H1 (cell line): ENCODE measurements at regions of chr19 and their contacts with region 1.

Region 1: GRCh38 chr19:55624109-55625003 is at the start of gene ZNF784:
- DNase-seq: peak; percentile 87 to 95
- H3K4me3 ChIP-seq: peak within 1 kb of the TSS; percentile 48 to 95 (median 70)
- H3K27ac ChIP-seq: peak within 1 kb of the TSS; percentile 84; the same call in 1 of the 2 replicates
- H3K4me1 ChIP-seq: peaks cover 0 to 3% (median 0%) of the 10 kb centered on the region in 4 experiments; a peak in 3 of 7 replicates
- H3K27me3 ChIP-seq: no peaks in the 10 kb centered on the region
- CTCF ChIP-seq: no peak
- EP300 ChIP-seq: no peak
- POLR2A ChIP-seq: peak; percentile 62 to 86
- RAD21 ChIP-seq: no peak
- total RNA-seq, gene ZNF784: 8.0 and 8.6 TPM in 2 replicates

Region 2: GRCh38 chr19:55490478-55491432 is 133.6 kb before region 1 on chr19:
- CTCF ChIA-PET with region 1: no interaction called
- POLR2A ChIA-PET with region 1: no interaction called
- DNase-seq: no peak
- H3K4me3 ChIP-seq: no peak overlapping the region
- H3K27ac ChIP-seq: no peak overlapping the region
- H3K4me1 ChIP-seq: peaks cover 0 to 43% (median 28%) of the 10 kb centered on the region in 4 experiments; a peak in 6 of 7 replicates
- H3K27me3 ChIP-seq: no peaks in the 10 kb centered on the region; a peak in 2 of 7 replicates
- CTCF ChIP-seq: no peak
- EP300 ChIP-seq: no peak
- POLR2A ChIP-seq: no peak
- RAD21 ChIP-seq: no peak

Region 3: GRCh38 chr19:55599468-55600279 is 24.7 kb before region 1 on chr19 and contains the start of gene FIZ1:
- CTCF ChIA-PET with region 1: no interaction called
- POLR2A ChIA-PET with region 1: interaction called, 25 read pairs
- DNase-seq: peak; percentile 93 to 97
- H3K4me3 ChIP-seq: peak within 1 kb of the TSS; percentile 78 to 95 (median 86)
- H3K27ac ChIP-seq: peak within 1 kb of the TSS; percentile 100
- H3K4me1 ChIP-seq: peaks cover 0 to 14% (median 7%) of the 10 kb centered on the region in 4 experiments; a peak in 5 of 7 replicates
- H3K27me3 ChIP-seq: no peaks in the 10 kb centered on the region
- CTCF ChIP-seq: no peak
- EP300 ChIP-seq: 0 out of 3 replicates have a peak, but pooled peaks of 1 of the 2 experiments have one; percentile 41
- POLR2A ChIP-seq: peak in 1 of 2 experiments; percentile 81; a peak in 2 of 3 replicates
- RAD21 ChIP-seq: no peak
- total RNA-seq, gene FIZ1: 17.6 and 18.5 TPM in 2 replicates

Region 4: GRCh38 chr19:55605207-55605636 is 19.1 kb before region 1 on chr19:
- CTCF ChIA-PET with region 1: interaction called, 9 read pairs
- POLR2A ChIA-PET with region 1: interaction called, 32 read pairs
- DNase-seq: peak; percentile 94 to 98
- H3K4me3 ChIP-seq: peak overlapping the region; percentile 54 to 93 (median 68)
- H3K27ac ChIP-seq: peak overlapping the region; percentile 64; the same call in 1 of the 2 replicates
- H3K4me1 ChIP-seq: peaks cover 0 to 14% (median 10%) of the 10 kb centered on the region in 4 experiments; a peak in 6 of 7 replicates
- H3K27me3 ChIP-seq: no peaks in the 10 kb centered on the region
- CTCF ChIP-seq: no peak
- EP300 ChIP-seq: no peak
- POLR2A ChIP-seq: peak; percentile 49 to 71
- RAD21 ChIP-seq: no peak

Region 5: DNA sequence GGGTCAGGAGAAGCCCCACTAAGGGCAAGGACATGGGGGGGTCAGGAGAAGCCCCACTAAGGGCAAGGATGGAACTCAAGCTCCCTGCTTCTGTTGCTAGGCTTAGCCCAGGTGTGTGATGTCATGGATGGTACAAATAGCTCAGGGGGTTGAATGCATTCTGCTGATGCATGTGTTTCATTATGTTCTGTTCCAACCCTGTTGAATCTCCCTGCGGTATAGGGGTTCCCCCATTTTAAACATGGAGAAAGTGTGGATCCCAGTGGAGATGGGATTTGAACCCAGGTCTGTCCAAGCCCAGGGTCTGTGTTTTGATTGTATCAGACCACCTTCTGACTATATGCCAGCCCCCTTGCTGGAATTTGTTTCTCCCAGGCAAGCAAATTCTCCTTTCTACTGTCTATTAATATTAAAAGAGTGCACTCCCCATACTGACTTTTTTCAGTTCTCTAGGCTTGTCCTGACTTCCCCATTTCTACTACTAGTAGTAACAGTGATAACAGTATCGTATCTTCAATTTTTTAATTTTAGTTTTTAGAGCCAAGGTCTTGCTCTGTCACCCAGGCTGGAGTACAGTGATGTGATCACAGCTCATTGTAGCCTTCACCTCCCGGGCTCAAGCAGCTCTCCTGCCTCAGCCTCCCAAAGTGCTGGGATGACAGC is 12.2 kb before region 1 on chr19:
- CTCF ChIA-PET with region 1: interaction called, 7 read pairs
- POLR2A ChIA-PET with region 1: interaction called, 32 read pairs
- DNase-seq: no peak
- H3K4me3 ChIP-seq: no peak overlapping the region
- H3K27ac ChIP-seq: no peak overlapping the region
- H3K4me1 ChIP-seq: no peaks in the 10 kb centered on the region
- H3K27me3 ChIP-seq: no peaks in the 10 kb centered on the region
- CTCF ChIP-seq: no peak
- EP300 ChIP-seq: no peak
- POLR2A ChIP-seq: no peak
- RAD21 ChIP-seq: no peak

Region 6: DNA sequence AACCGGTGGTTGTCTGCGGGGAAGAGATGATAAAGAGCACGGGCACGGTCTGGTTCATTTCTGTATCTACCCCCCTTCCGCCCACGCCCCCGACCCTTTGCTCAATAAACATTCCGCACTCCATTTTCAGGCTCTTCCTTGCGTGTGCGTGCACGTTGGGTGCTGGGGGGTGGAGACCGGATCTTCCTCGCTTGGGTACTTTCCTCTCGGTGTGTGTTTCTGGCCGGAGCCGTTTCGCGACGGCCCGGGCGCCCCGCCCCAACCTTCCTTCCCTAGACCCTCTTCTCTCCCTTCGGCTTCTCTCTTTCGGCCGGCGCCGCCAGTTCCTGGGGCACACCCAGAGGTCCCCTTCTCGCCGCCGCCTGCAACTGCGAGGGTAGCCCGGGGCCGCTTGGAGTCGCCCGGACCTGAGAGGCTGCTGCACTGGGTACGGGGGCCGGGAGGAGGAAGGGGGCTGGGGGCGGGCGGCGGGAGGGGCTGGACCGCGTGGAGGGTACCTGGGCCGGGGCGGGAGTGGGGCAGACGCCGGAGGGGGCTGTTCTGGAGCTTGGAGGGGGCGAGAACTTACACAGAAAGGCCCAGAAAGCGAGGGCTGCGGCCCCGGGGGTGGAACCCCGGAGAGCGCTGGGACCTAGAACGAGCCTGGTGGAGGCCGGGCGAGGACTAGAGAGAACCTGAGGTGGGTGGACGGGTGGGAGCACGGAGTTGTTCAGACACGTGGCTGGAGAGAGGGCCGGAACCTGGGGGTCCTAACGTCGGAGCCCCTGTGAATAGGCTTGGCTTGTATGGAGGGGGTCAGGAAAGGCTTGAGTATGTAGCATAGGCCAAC is 19.2 kb after region 1 on chr19 and contains the start of gene ZNF581:
- CTCF ChIA-PET with region 1: interaction called, 56 read pairs
- POLR2A ChIA-PET with region 1: interaction called, 13 read pairs
- DNase-seq: peak in 1 of 2 experiments; percentile 90
- H3K4me3 ChIP-seq: peak within 1 kb of the TSS; percentile 74 to 98 (median 88)
- H3K27ac ChIP-seq: peak within 1 kb of the TSS; percentile 48
- H3K4me1 ChIP-seq: peaks cover 0 to 22% (median 11%) of the 10 kb centered on the region in 4 experiments; a peak in 6 of 7 replicates
- H3K27me3 ChIP-seq: no peaks in the 10 kb centered on the region
- CTCF ChIP-seq: no peak
- EP300 ChIP-seq: peak in 1 of 2 experiments; percentile 56; a peak in 1 of 3 replicates
- POLR2A ChIP-seq: peak in 1 of 2 experiments; percentile 13; a peak in 2 of 3 replicates
- RAD21 ChIP-seq: no peak
- total RNA-seq, gene ZNF581: 73.0 and 76.0 TPM in 2 replicates

Region 7: DNA sequence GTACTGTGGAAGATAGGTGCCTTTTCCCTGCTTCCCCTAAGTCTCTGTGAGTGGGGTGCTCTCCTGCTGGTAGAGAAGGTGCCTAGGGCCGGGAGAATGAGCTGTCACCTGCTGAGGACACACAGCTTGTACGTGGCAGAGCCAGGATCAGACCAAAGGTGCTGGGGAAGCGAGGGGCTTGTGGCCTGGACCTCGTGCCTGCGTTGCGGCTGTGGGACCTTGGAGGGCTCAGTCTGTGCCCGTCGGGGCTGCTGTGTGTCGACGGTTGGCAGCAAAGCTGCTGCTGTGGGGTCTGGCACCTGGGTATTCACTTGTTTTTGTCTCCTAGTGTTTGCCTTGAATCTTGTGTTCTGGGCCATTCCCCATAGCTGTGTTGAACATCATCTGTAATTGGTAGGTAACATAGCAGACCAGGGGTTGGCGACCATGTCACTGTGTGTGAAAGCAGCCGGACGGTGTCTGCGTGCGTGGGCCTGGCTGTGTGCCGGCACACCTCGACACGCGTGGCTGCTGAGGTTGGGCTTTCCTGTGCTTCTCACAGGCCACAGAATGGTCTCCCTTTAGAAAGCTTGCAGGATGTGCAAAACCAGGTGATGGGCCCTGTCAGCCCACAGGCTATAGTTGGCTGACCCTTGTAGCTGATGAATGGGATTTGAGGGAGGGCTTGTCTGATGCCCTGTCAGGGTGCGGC is 39.6 kb after region 1 on chr19:
- CTCF ChIA-PET with region 1: no interaction called
- POLR2A ChIA-PET with region 1: no interaction called
- DNase-seq: no peak
- H3K4me3 ChIP-seq: no peak overlapping the region
- H3K27ac ChIP-seq: no peak overlapping the region
- H3K4me1 ChIP-seq: no peaks in the 10 kb centered on the region
- H3K27me3 ChIP-seq: no peaks in the 10 kb centered on the region
- CTCF ChIP-seq: no peak
- EP300 ChIP-seq: no peak
- POLR2A ChIP-seq: no peak
- RAD21 ChIP-seq: no peak